ENCODE measurements at regions of chr11 and their contacts with region 1.

Region 1: DNA sequence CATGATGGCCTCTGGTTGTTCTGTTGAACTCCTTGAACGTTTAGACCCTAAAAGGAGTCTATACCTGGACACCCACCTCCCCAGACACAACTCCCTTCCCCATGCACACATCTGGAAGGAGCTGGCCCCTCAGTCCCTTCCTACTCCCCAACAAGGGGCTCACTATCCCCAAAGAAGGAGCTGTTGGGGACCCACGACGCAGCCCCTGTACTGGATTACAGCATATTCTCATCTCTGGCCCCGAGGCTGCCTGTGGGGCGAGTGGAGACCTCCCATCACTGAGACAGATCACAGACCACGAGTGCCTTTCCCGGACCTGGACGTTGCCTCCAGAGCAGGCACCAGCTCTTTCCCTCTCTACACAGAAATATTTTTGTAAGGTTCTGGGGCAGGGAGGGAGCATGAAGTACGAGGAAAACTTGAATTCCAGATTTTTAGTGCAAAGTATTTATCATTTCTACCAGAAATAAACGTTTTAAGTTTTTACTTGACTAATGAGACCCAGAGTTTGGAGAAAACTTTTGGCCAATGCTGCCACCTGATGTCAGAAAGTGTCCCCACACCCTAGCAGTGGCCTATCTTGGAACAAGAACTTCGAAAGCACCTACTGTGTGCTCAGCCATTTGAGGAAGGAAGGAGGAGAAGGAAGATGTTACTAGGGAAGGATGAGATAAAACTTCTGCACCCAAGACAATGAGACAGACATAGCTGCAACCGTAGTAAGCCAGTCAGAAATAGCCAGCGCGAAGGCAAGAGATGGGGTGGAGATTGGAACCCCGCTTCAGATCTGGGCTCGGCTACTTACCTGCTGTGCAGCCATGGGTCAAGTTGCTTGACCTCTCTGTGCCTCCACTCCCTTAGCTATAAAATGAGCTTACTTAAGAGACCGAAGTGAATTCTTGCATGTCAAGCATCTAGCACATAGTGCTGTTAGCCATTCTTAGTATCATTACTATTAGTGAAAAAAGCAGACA is 10.2 kb upstream of the POU2F3 start:
- DNase-seq: no peak
- H3K4me3 Mint-ChIP-seq: no peak overlapping the region
- H3K27ac Mint-ChIP-seq: no peak overlapping the region
- H3K4me1 Mint-ChIP-seq: no peaks in the 10 kb centered on the region
- H3K27me3 Mint-ChIP-seq: peaks cover 14% of the 10 kb centered on the region

Region 2: GRCh38 chr11:120172054-120172911 is 57.5 kb before region 1 on chr11:
- intact Hi-C with region 1: loop called (anchors 2 kb)
- DNase-seq: peak; percentile 27
- H3K4me3 Mint-ChIP-seq: no peak overlapping the region
- H3K27ac Mint-ChIP-seq: no peak overlapping the region
- H3K4me1 Mint-ChIP-seq: peaks cover 4% of the 10 kb centered on the region
- H3K27me3 Mint-ChIP-seq: peaks cover 65% of the 10 kb centered on the region